Ascending aorta (tissue), 2 donors: ENCODE measurements at regions of chr1 and their contacts with region 1.

Region 1: DNA sequence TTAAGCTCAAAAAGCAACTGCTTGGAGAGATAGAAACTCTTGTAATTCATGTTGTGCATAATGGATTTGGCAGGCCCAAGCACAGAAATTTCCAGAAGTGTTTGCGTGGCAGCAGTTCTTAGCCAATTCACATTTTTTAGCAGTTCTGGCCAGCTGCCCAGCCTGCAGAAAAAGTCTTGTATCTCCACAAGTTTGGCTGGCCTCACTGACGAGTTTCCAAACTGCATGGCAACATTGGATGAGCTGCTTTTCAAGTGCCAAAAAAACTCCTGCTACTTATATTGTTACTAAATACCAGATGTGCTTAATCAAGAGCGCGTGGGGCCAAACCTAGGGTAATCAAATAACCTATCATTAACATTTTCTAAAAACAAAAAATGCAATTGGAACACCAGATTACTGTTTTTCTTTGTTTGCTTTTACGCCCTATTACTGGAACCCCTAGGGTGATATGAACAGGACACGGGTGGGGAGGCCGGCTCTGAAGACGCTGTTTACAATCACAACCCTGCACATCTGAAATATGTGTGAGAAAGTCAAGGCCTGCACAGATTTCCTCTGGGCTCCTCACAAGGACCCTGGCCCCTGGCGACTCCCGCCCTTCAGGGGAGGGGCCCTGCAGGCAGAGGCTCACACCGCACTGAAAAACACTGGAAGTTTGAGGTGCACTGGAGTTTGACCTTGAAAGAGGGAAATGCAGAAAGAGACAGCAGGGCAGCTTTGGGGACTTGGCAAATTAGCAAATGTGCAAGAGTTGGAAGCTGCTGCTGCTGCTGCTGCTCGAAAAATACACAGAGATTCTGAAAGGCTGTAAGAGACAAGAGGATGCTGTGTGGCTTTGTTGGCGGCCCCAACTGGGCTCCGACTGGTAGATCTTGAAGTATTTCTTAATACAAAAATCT is 55.2 kb upstream of the TARBP1 start:
- DNase-seq: peak; percentile 62 to 98
- H3K4me3 ChIP-seq: peak overlapping the region in 1 of 2 donors; percentile 2
- H3K27ac ChIP-seq: peak overlapping the region; percentile 95 to 99
- H3K4me1 ChIP-seq: peaks cover 43 to 90% of the 10 kb centered on the region in 2 donors
- H3K27me3 ChIP-seq: no peaks in the 10 kb centered on the region
- CTCF ChIP-seq: no peak

Region 2: DNA sequence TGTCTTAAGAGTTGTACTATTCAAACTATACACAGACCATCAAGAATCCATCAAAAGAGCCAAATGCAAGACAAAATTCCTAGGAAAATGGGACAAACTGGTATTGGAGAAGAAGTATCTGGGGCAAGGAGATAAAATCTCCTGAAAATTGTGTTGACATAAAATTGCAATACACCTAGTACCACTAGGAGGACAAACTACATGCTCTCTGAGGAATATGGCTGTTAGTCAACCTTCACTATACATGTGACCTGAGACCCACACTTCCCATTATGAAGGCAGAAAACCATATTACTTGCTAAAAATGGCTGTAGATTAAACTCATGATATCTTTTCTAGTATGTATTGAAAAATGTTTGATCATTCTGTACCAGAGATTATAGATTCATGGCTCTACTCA is 45.7 kb after region 1 on chr1:
- intact Hi-C with region 1: loop called (anchors 1 kb)
- DNase-seq: no peak
- H3K4me3 ChIP-seq: no peak overlapping the region
- H3K27ac ChIP-seq: no peak overlapping the region
- H3K4me1 ChIP-seq: peaks cover 8 to 32% of the 10 kb centered on the region in 2 donors
- H3K27me3 ChIP-seq: no peaks in the 10 kb centered on the region
- CTCF ChIP-seq: no peak

Region 3: DNA sequence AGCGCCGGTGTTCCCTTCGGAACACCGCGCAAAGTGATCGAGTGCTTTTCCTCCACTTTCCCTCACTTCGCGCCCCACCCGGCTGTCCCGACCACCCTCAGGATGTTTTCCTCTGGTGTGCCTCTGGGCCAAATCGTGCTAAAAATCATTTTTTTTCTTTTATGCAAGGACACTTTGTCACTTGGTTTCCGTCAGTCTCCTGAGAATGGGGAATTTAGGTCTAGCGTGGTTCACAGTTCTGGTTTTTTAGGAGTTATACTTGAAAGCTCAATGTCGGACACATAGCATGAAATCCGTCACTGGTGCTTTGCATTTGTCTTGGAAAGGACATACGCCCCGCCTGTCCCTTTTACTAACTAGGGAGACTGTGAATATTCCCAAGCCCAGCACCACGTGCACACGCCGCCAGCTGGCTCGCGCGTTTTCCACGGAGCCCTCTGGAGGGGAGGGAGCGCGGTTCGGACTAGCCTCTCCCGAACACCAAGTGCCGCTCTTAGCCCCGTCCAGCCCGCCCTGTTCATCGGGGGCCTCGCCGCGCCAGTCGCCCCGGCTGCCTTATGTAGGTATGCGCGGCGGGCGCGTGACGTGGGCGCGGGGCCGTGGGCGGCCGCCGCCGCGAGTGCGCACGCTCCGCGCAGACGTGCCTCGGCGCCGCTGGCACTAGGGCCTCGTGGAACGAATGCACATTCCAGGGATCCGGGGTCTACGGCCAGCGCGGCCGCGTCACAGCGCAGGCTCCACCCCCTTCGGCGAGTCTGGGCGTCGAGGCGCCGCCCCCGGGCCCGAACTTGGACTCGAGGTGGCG is 76.3 kb after region 1 on chr1:
- intact Hi-C with region 1: loop called (anchors 2 kb)
- DNase-seq: peak; percentile 90 to 98
- H3K4me3 ChIP-seq: peak overlapping the region; percentile 66 to 74
- H3K27ac ChIP-seq: peak overlapping the region; percentile 94 to 99
- H3K4me1 ChIP-seq: peaks cover 15 to 31% of the 10 kb centered on the region in 2 donors
- H3K27me3 ChIP-seq: no peaks in the 10 kb centered on the region
- CTCF ChIP-seq: no peak

Region 4: DNA sequence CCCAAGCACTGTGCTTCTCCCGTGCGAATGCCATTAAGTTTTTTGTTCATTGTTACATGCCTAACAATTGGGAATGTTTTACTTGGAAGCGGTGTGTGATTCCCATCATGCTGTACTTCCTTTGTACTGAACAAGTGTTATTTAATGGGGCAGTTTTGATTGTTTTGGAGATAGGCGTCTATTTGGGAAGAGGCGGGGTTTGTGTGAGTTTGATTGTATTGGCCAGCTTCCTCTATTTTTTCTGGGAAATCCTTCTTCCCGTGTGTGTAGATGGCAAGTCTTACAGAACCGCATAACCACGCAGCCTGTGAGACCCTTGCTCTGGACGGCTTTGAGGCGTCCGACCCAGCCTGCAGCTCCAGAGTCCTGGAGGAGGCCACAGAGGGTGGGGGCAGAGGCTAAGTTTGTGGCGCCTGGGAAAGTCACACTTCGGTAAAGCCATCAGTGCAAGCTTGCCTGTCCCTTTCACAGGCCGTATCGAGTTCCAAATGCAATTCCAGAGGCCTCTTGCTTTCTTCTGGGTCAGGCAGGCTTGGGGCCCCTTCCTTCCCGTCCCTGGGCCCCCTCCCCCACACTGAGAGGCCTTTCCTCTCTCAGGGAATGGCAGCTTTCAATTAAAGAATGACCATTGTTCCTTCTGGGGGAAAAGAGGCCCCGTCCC is 384.1 kb after region 1 on chr1:
- intact Hi-C with region 1: loop called (anchors 5 kb)
- DNase-seq: peak in 1 of 2 donors; percentile 75
- H3K4me3 ChIP-seq: no peak overlapping the region
- H3K27ac ChIP-seq: peak overlapping the region; percentile 86 to 94
- H3K4me1 ChIP-seq: peaks cover 28 to 77% of the 10 kb centered on the region in 2 donors
- H3K27me3 ChIP-seq: no peaks in the 10 kb centered on the region
- CTCF ChIP-seq: no peak

Region 5: DNA sequence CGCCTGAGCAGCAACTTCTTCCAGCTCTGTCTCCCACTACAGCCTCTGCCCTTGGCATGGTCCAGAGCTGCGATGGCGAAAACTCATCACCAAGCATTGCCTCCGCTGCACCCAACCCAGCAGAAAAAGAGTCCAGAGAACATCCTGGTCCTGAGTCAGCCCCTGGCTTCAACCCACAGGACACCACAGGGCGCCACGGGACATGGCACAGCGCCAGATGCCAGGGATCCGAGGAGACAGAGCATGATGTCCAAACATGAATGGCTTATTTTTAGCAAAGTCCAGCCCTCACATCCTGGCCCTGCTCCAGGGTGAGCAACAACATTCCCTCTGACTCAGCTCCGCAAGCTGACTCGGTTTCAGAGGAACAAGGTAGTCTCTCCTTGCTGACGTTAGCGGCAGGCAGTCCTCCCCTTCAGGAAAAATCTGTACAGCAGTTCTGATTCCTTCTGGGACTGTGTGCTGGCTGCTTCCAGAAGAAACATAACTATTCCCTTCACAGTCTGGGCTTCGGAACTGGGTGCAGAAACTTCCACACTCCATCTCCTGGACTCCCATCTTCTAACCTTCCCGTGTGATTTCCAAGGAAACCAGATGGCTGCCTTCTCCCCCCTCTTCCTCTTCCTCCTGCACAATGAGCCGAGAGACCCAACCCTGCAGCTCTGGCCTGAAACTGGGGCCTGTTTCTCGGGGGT is 463.1 kb after region 1 on chr1:
- intact Hi-C with region 1: loop called (anchors 2 kb)
- DNase-seq: peak; percentile 99 to 100
- H3K4me3 ChIP-seq: peak overlapping the region; percentile 28 to 29
- H3K27ac ChIP-seq: peak overlapping the region; percentile 89 to 94
- H3K4me1 ChIP-seq: peaks cover 3 to 28% of the 10 kb centered on the region in 2 donors
- H3K27me3 ChIP-seq: no peaks in the 10 kb centered on the region
- CTCF ChIP-seq: no peak

Region 6: GRCh38 chr1:235011599-235012435 is 477.6 kb after region 1 on chr1:
- intact Hi-C with region 1: no loop called
- DNase-seq: peak; percentile 75 to 82
- H3K4me3 ChIP-seq: no peak overlapping the region
- H3K27ac ChIP-seq: peak overlapping the region in 1 of 2 donors; percentile 36
- H3K4me1 ChIP-seq: no peaks in the 10 kb centered on the region
- H3K27me3 ChIP-seq: no peaks in the 10 kb centered on the region
- CTCF ChIP-seq: no peak